ENCODE measurements at regions of chr3 and their contacts with region 1.

Region 1: GRCh38 chr3:52056968-52057805 is 816 bp upstream of the DUSP7 start:
- DNase-seq: peak; percentile 97
- ATAC-seq: peak; percentile 87
- H3K4me3 ChIP-seq: peak overlapping the region; percentile 51
- H3K27ac ChIP-seq: peak overlapping the region; percentile 83
- H3K4me1 ChIP-seq: peaks cover 19% of the 10 kb centered on the region
- H3K27me3 ChIP-seq: no peaks in the 10 kb centered on the region
- CTCF ChIP-seq: no peak
- POLR2A ChIP-seq: peak; percentile 35; the same call in 1 of the 2 replicates
- RAD21 ChIP-seq: no peak

Region 2: GRCh38 chr3:51591231-51591630 is 466.0 kb before region 1 on chr3:
- CTCF ChIA-PET with region 1: no interaction called
- POLR2A ChIA-PET with region 1: no interaction called
- dilution Hi-C with region 1: no loop called
- in situ Hi-C with region 1: no loop called
- intact Hi-C with region 1: no loop called
- DNase-seq: peak; percentile 22
- ATAC-seq: peak; percentile 88
- H3K4me3 ChIP-seq: no peak overlapping the region
- H3K27ac ChIP-seq: no peak overlapping the region
- H3K4me1 ChIP-seq: no peaks in the 10 kb centered on the region
- H3K27me3 ChIP-seq: no peaks in the 10 kb centered on the region
- CTCF ChIP-seq: no peak
- POLR2A ChIP-seq: no peak
- RAD21 ChIP-seq: no peak

Region 3: DNA sequence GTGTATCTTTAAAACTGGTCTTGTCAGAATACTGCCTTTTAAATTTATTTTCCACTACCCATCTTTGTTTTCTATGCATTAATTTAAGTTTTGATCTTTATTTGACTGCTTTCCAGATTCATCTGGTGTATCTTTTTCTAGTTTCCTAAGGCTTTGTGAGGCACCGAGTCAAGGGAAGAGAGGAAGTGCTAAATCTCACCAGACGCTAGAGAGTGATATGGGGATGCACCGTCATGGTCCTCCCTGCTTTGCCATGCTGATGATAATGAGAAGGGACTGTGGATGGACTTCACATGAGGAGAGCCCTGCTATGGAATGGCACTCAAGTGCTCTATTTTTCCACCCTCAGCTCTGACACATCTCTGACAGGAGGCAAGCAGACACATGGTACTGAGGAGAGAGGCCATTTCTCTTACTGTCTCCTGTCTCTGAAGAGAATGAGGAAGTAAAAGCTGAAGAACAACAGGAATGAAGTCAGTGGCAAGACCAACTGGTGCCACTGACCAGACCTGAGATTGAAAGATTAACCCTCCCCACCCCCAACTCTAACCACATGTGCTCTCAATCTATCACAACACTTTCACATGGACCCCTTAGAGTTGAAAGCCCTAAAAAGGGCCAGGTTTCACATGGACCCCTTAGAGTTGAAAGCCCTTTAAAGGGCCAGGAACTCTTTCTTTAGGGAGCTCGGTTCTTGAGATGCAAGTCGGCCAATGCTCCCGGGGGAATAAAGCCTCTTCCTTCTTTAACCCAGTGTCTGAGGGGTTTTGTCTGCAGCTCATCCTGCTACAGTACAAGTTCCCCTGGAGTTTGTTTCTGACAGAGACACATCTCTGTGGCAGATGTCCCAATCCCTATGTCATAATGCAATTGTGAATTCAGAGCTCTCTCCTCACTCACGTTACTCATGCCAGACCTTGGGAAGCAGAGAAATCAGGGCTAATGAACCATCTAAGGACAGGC is 196.2 kb before region 1 on chr3 and contains the start of gene IQCF2:
- CTCF ChIA-PET with region 1: no interaction called
- POLR2A ChIA-PET with region 1: no interaction called
- dilution Hi-C with region 1: no loop called
- in situ Hi-C with region 1: no loop called
- intact Hi-C with region 1: no loop called
- DNase-seq: no peak
- ATAC-seq: no peak
- H3K4me3 ChIP-seq: no peak within 1 kb of the TSS
- H3K27ac ChIP-seq: no peak within 1 kb of the TSS
- H3K4me1 ChIP-seq: no peaks in the 10 kb centered on the region
- H3K27me3 ChIP-seq: no peaks in the 10 kb centered on the region
- CTCF ChIP-seq: no peak
- POLR2A ChIP-seq: no peak
- RAD21 ChIP-seq: no peak
- total RNA-seq, gene IQCF2: not detected in 2 replicates

Region 4: GRCh38 chr3:51874889-51875288 is 182.3 kb before region 1 on chr3:
- CTCF ChIA-PET with region 1: no interaction called
- POLR2A ChIA-PET with region 1: no interaction called
- dilution Hi-C with region 1: no loop called
- in situ Hi-C with region 1: no loop called
- intact Hi-C with region 1: no loop called
- DNase-seq: no peak
- ATAC-seq: no peak
- H3K4me3 ChIP-seq: no peak overlapping the region
- H3K27ac ChIP-seq: no peak overlapping the region
- H3K4me1 ChIP-seq: no peaks in the 10 kb centered on the region
- H3K27me3 ChIP-seq: no peaks in the 10 kb centered on the region
- CTCF ChIP-seq: no peak
- POLR2A ChIP-seq: no peak
- RAD21 ChIP-seq: no peak

Region 5: DNA sequence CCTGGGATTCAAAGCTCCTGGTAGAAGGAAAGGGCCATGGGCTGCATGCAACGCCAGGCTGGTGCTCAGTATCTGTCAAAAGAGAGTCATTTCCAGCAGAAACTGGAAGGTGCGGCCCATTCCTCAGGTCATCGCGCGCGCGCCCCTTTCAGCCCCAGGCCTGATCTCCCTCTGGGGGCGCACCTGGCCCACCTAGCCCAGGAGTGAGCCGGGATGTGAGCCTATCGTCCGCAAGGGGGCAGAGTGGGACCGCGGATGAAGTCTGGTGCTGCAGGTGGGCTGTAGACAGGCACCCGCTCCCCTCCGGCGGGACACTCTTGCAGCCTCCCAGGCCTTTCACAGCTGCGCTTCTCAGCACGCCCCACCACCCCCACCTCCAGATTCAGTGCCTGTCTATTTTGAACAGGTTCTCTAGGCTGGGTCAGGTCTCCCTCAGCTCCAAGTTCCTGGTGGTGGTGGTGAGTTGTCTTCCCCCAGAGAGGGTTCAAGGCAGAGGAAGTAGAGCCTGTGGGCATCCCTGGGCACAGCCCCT is 55.7 kb before region 1 on chr3:
- CTCF ChIA-PET with region 1: interaction called, 28 read pairs
- POLR2A ChIA-PET with region 1: no interaction called
- dilution Hi-C with region 1: no loop called
- in situ Hi-C with region 1: no loop called
- intact Hi-C with region 1: loop called (anchors 1 kb)
- DNase-seq: peak; percentile 43
- ATAC-seq: peak; percentile 75
- H3K4me3 ChIP-seq: no peak overlapping the region
- H3K27ac ChIP-seq: no peak overlapping the region
- H3K4me1 ChIP-seq: peaks cover 11% of the 10 kb centered on the region
- H3K27me3 ChIP-seq: no peaks in the 10 kb centered on the region
- CTCF ChIP-seq: peak; percentile 96
- POLR2A ChIP-seq: peak; percentile 54; the same call in 1 of the 2 replicates
- RAD21 ChIP-seq: peak; percentile 97

Region 6: DNA sequence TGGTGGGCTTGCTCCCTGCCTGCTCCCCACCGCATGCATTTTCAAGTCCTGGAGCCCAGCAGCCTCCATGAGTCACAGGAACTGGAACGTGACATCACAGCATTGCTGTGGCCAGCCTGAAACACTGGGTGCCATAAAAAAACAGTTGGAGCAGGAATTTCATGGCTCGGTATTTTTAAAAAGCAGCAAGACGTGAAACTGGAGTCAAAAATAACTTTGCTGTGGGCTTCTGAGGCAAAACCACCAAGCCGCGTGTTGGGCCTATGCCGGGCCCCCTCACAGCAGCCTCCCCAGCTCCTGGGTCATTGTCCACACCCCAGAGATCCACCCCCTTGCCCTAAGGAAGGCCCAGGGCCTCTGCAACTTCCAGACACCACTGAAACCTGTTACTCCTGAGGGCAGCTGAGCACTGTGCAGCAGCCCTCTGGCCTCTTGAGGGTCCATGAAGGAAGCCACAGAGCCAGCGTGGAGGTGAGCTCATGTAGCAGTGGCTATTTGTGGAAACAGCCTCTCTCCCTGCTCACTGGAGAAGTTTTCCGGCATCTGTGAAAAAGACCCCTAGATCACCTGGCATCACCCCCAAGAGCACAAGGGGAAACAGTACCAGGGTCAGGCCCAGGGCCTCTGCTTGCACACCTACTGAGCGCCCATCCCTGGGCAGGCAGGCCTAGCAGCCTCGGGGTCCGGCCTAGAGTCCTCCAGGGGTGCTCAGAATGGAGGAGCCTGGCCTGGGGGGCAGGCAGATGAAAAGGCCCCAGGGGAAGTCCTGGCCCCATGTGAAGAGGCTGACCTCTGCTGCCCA is 33.1 kb after region 1 on chr3:
- CTCF ChIA-PET with region 1: no interaction called
- POLR2A ChIA-PET with region 1: no interaction called
- dilution Hi-C with region 1: no loop called
- in situ Hi-C with region 1: no loop called
- intact Hi-C with region 1: loop called (anchors 2 kb)
- DNase-seq: peak; percentile 92
- ATAC-seq: peak; percentile 75
- H3K4me3 ChIP-seq: no peak overlapping the region
- H3K27ac ChIP-seq: peak overlapping the region; percentile 89
- H3K4me1 ChIP-seq: peaks cover 50% of the 10 kb centered on the region
- H3K27me3 ChIP-seq: no peaks in the 10 kb centered on the region
- CTCF ChIP-seq: no peak
- POLR2A ChIP-seq: no peak
- RAD21 ChIP-seq: peak; percentile 13; the same call in 1 of the 2 replicates

Region 7: DNA sequence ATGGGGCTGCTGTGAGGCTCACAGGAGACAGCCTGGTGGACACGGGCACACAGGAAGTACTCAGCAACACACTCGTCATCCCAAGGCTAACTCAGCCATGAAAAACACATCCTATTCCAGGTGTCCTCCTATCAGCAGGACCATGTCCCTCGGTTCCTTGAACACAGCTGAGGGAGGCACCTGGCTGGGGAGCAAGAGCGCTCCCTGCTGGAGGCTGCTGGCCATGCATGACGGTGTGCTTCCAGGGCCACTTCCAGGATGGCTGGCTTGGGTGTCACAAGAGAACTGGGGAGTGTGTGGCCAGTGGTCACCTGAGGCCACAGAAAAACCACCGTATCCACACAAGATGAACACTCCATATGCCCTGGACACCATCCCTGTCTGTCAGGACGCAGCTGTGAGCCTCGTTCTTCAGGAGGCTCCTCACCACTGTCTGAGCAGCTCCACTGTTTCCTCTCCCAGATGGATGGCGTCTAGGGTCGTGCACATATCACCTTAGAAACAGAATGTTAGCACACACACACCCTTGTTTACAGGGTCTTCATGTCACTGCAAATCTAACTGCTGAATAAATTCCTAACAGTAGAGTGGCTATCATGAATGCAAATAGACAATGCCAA is 66.0 kb after region 1 on chr3:
- CTCF ChIA-PET with region 1: interaction called, 5 read pairs
- POLR2A ChIA-PET with region 1: no interaction called
- dilution Hi-C with region 1: no loop called
- in situ Hi-C with region 1: no loop called
- intact Hi-C with region 1: loop called (anchors 1 kb)
- DNase-seq: peak; percentile 65
- ATAC-seq: peak; percentile 97
- H3K4me3 ChIP-seq: no peak overlapping the region
- H3K27ac ChIP-seq: no peak overlapping the region
- H3K4me1 ChIP-seq: peaks cover 2% of the 10 kb centered on the region
- H3K27me3 ChIP-seq: no peaks in the 10 kb centered on the region
- CTCF ChIP-seq: peak; percentile 94
- POLR2A ChIP-seq: 0 out of 2 replicates have a peak, but pooled peaks have one; percentile 40
- RAD21 ChIP-seq: peak; percentile 98

Region 8: DNA sequence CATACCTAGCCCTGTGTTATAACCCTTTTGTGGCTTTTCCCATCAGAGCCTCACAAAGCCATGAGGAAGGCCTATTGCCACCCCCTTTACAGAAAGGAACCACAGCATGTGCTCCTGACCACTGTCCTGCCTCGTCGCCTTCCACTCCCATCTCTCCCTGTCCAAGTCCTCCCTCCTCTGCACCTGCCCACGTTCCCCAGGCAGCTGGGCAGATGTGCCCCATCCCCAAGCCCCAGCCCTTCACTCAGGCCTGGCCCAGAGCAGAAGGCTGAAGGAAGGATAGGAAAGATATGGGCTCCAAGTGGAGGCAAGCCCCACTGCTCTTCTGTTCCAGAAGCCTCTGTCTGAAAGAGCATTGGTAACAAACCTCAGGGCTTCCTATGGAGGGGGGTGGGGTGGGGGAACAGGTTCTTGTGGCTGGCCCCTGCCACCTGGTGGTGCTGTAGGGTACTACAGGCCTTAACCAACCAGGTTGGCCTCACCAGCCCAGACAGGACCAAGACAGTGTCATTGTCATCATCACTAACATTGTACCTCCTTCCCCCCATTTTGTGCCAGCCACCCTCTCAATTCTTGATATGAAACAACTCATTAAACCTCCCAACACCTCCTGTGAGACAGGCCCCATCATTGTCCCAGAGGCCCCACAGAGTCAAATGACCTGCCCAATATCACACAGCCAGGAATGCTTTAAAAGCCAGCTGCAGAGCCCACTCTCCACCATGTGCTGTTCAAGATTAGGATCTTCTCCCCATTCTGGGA is 87.0 kb after region 1 on chr3:
- CTCF ChIA-PET with region 1: no interaction called
- POLR2A ChIA-PET with region 1: interaction called, 3 read pairs
- dilution Hi-C with region 1: no loop called
- in situ Hi-C with region 1: no loop called
- intact Hi-C with region 1: loop called (anchors 5 kb)
- DNase-seq: peak; percentile 77
- ATAC-seq: peak; percentile 99
- H3K4me3 ChIP-seq: no peak overlapping the region
- H3K27ac ChIP-seq: no peak overlapping the region
- H3K4me1 ChIP-seq: peaks cover 5% of the 10 kb centered on the region
- H3K27me3 ChIP-seq: no peaks in the 10 kb centered on the region
- CTCF ChIP-seq: peak; percentile 93
- POLR2A ChIP-seq: no peak
- RAD21 ChIP-seq: peak; percentile 93

Region 9: DNA sequence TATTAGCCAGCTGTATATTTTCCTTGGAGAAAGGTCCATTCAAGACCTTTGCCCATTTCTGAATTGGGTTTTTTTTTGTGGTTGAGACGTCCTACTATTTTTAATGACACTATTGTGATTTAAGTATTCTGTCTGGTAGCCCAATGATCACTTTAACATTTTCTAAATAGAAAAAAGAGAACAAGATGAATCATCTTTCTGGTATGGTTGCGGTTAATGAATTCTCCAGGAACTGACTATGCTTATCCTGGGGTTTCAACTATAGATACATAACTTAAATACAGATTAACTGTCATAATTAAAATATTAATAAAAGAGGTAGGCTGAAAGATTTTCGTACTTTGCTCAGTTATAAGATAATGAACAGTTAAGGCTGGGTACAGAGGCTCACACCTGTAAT is 576.6 kb after region 1 on chr3:
- CTCF ChIA-PET with region 1: no interaction called
- POLR2A ChIA-PET with region 1: no interaction called
- dilution Hi-C with region 1: no loop called
- in situ Hi-C with region 1: no loop called
- intact Hi-C with region 1: no loop called
- DNase-seq: peak; percentile 56
- ATAC-seq: peak; percentile 46; the same call in 1 of the 2 replicates
- H3K4me3 ChIP-seq: no peak overlapping the region
- H3K27ac ChIP-seq: no peak overlapping the region
- H3K4me1 ChIP-seq: no peaks in the 10 kb centered on the region; the same call in 1 of the 2 replicates
- H3K27me3 ChIP-seq: no peaks in the 10 kb centered on the region
- CTCF ChIP-seq: no peak
- POLR2A ChIP-seq: no peak
- RAD21 ChIP-seq: no peak